Psoas muscle (tissue), 8 donors: ENCODE measurements at regions of chr16 and their contacts with region 1.

Region 1: GRCh38 chr16:54062361-54063278 is 224.0 kb downstream of the IRX3 start:
- DNase-seq: no peak
- ATAC-seq: no peak
- H3K4me3 ChIP-seq: no peak overlapping the region
- H3K27ac ChIP-seq: no peak overlapping the region
- H3K4me1 ChIP-seq: peaks cover 16% of the 10 kb centered on the region
- H3K27me3 ChIP-seq: no peaks in the 10 kb centered on the region
- CTCF ChIP-seq: no peak

Region 2: DNA sequence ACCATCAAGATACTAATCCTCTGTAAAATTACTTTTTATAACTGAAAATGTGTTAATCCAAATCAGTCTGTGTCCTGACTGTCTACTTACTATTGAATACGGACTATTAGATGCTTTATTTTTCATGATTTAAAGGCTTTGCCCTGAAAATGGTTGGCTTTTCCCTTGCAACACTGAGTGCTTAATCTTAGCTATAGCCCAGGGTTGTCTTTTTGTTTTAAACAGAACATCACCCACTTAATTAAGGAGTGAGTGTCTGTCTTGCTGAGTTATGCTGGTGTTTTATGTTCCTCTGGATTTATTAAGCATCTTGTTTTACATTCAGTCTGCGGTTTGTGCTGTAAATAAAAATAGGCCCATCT is 347.6 kb before region 1 on chr16:
- intact Hi-C with region 1: no loop called
- DNase-seq: no peak
- ATAC-seq: no peak
- H3K4me3 ChIP-seq: no peak overlapping the region
- H3K27ac ChIP-seq: no peak overlapping the region
- H3K4me1 ChIP-seq: peaks cover 35% of the 10 kb centered on the region
- H3K27me3 ChIP-seq: no peaks in the 10 kb centered on the region
- CTCF ChIP-seq: no peak

Region 3: GRCh38 chr16:53999841-54000240 is 62.8 kb before region 1 on chr16:
- intact Hi-C with region 1: loop called in 1 of 2 experiments (anchors 5 kb)
- DNase-seq: no peak
- ATAC-seq: no peak
- H3K4me3 ChIP-seq: no peak overlapping the region
- H3K27ac ChIP-seq: no peak overlapping the region
- H3K4me1 ChIP-seq: peaks cover 21% of the 10 kb centered on the region
- H3K27me3 ChIP-seq: no peaks in the 10 kb centered on the region
- CTCF ChIP-seq: no peak

Region 4: GRCh38 chr16:54015147-54015546 is 47.5 kb before region 1 on chr16:
- intact Hi-C with region 1: no loop called
- DNase-seq: no peak
- ATAC-seq: no peak
- H3K4me3 ChIP-seq: no peak overlapping the region
- H3K27ac ChIP-seq: no peak overlapping the region
- H3K4me1 ChIP-seq: no peaks in the 10 kb centered on the region
- H3K27me3 ChIP-seq: no peaks in the 10 kb centered on the region
- CTCF ChIP-seq: no peak

Region 5: DNA sequence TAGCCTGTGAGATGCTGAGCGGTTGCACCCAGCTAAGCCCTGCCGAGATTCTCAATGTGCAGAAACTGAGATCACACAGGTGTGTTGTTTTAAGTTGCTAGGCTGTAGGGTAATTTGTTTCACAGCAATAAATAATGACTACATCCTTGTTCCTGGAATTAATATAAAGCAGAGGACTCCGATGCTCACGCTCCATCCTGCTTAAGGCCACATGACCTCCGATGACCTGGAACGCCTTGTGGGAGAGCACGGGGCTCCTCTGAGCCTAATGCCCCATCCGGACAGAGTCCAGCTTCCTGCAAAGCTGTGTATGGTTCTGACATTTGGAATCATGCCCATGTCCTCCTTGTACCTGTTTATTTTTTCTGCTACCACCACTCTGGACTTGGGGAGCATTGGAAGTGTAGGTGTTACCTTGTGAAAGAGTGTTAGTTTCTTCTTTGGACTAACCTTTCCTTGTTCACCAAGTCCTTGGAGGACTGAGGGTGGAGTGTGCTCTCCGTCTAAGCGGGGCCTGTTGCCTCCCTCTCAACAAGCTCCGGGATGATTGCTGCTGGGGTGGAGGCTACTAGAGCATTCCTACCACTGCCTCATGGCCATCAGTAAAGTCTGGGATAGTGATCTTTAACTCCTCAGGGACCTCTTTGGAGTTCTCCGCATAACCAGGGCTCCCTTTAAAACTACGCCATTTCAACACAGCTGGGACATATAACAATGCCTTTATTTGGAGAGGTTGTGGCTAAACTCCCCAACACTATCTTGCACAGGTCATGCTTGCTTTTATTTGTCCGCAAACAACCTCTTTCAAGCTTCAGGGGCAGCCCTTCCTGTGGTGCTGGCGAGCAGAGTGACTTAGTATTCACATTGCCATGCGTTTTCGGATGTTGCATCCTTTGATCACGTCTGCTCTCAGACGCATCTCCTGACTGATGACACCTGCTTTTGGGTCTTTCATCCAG is 98.6 kb after region 1 on chr16:
- intact Hi-C with region 1: no loop called
- DNase-seq: no peak
- ATAC-seq: no peak
- H3K4me3 ChIP-seq: no peak overlapping the region
- H3K27ac ChIP-seq: no peak overlapping the region
- H3K4me1 ChIP-seq: no peaks in the 10 kb centered on the region
- H3K27me3 ChIP-seq: no peaks in the 10 kb centered on the region
- CTCF ChIP-seq: no peak

Region 6: DNA sequence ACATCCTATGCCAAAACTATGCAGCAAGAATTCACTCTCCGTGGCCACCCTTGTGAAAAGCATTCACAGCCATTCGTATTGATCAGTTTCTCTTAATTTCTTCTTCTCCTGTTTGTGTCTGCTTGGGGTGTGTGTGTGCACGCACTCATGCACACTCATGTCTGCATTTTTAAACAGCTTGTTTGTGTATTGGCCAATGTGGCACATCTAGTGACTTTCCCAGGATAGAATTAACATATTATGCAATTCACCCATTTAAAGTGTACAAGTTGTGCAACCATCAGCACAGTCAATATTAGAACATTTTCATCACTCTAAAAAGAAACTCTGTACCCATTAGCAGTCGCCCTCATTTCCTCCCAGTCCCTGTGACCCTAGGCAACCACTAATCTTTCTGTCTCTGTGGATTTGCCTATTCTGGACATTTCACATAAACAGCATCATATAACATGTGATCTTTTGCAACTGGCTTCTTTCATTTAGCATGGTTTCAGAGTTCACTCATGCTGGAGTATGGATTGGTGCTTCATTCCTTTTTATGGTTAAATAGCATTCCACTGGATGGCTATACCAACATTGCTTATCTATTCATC is 203.8 kb after region 1 on chr16:
- intact Hi-C with region 1: no loop called
- DNase-seq: no peak
- ATAC-seq: peak in 3 of 4 donors; percentile 55 to 88 (median 76)
- H3K4me3 ChIP-seq: no peak overlapping the region
- H3K27ac ChIP-seq: no peak overlapping the region
- H3K4me1 ChIP-seq: peaks cover 16% of the 10 kb centered on the region
- H3K27me3 ChIP-seq: no peaks in the 10 kb centered on the region
- CTCF ChIP-seq: no peak